CD14-positive monocyte (primary cell): ENCODE measurements at regions of chr14 and their contacts with region 1.

Region 1: GRCh38 chr14:35365130-35366055 is 39.2 kb downstream of the NFKBIA start:
- DNase-seq: peak; percentile 97 to 99 (median 97)
- H3K4me3 ChIP-seq: peak overlapping the region in 1 of 3 experiments; percentile 4
- H3K4me3 Mint-ChIP-seq: peak overlapping the region; percentile 48 to 61
- H3K27ac ChIP-seq: peak overlapping the region; percentile 96 to 98
- H3K27ac Mint-ChIP-seq: peak overlapping the region; percentile 98 to 100 (median 99)
- H3K4me1 ChIP-seq: peaks cover 43 to 44% of the 10 kb centered on the region in 2 donors
- H3K4me1 Mint-ChIP-seq: peaks cover 47% of the 10 kb centered on the region
- H3K27me3 ChIP-seq: no peaks in the 10 kb centered on the region
- H3K27me3 Mint-ChIP-seq: peaks cover 0 to 3% (median 0%) of the 10 kb centered on the region in 3 donors
- CTCF ChIP-seq: no peak

Region 2: GRCh38 chr14:35213143-35213788 is 152.1 kb before region 1 on chr14:
- intact Hi-C with region 1: no loop called
- DNase-seq: no peak
- H3K4me3 ChIP-seq: no peak overlapping the region
- H3K4me3 Mint-ChIP-seq: no peak overlapping the region
- H3K27ac ChIP-seq: no peak overlapping the region
- H3K27ac Mint-ChIP-seq: no peak overlapping the region
- H3K4me1 ChIP-seq: no peaks in the 10 kb centered on the region
- H3K4me1 Mint-ChIP-seq: no peaks in the 10 kb centered on the region
- H3K27me3 ChIP-seq: no peaks in the 10 kb centered on the region
- H3K27me3 Mint-ChIP-seq: no peaks in the 10 kb centered on the region
- CTCF ChIP-seq: no peak

Region 3: GRCh38 chr14:35285168-35286002 is 80.0 kb before region 1 on chr14:
- intact Hi-C with region 1: loop called in 1 of 2 experiments (anchors 10 kb)
- DNase-seq: peak; percentile 86 to 96 (median 94)
- H3K4me3 ChIP-seq: peak overlapping the region; percentile 2 to 72 (median 48)
- H3K4me3 Mint-ChIP-seq: peak overlapping the region; percentile 71 to 85
- H3K27ac ChIP-seq: peak overlapping the region; percentile 55 to 96
- H3K27ac Mint-ChIP-seq: peak overlapping the region; percentile 93 to 99 (median 97)
- H3K4me1 ChIP-seq: peaks cover 45 to 49% of the 10 kb centered on the region in 2 donors
- H3K4me1 Mint-ChIP-seq: peaks cover 50% of the 10 kb centered on the region
- H3K27me3 ChIP-seq: no peaks in the 10 kb centered on the region
- H3K27me3 Mint-ChIP-seq: peaks cover 0 to 4% (median 0%) of the 10 kb centered on the region in 3 donors
- CTCF ChIP-seq: no peak

Region 4: DNA sequence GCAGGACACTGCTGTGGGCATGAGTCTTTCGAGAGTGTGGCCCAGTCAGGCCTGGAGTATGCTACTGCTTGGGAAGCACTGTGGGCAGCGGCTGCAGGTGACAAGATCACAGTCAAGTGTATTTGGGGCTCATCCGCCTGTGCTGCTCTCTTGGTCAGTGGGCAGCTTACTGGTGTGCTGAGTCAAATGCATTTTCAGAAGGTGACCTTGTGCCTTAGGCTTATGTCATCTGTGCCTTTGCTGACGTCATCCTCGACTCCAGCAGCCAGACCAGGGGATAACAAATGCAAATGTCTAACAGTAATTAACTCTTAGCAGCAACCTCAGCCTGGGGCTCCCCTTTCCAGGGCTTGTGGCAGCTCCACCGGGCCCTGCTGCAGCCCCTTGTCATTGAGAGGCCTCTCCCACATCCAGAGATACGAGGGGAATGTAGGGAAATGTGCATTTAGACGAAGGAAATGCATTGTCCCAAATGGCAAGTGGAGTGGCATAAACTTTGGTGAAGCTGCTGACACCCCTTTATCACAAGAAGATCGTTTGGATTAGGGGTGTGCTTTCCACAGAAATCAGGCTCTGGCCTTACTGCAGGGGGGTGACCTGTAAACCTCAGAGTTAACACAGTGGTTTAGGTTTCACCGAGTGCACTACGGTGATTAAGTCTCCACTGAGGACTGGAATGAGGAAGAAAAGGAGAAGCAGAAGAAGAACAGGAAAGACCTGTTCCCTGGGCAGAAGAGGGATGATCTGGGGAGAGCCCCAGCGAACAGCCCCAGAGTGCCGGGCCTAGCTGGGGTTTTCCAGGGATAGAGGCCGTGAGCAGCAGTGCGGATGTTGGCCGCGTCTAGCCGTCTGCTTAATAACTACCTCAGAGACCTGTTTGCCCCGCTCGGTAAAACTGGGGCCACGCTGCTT is 33.5 kb before region 1 on chr14:
- intact Hi-C with region 1: loop called in 1 of 2 experiments (anchors 5 kb)
- DNase-seq: peak; percentile 62 to 93 (median 70)
- H3K4me3 ChIP-seq: peak overlapping the region in 1 of 3 experiments; percentile 48
- H3K4me3 Mint-ChIP-seq: peak overlapping the region; percentile 57 to 74
- H3K27ac ChIP-seq: peak overlapping the region; percentile 39 to 61
- H3K27ac Mint-ChIP-seq: peak overlapping the region; percentile 86 to 94 (median 91)
- H3K4me1 ChIP-seq: peaks cover 48% of the 10 kb centered on the region in 2 donors
- H3K4me1 Mint-ChIP-seq: peaks cover 48% of the 10 kb centered on the region
- H3K27me3 ChIP-seq: no peaks in the 10 kb centered on the region
- H3K27me3 Mint-ChIP-seq: peaks cover 0 to 3% (median 0%) of the 10 kb centered on the region in 3 donors
- CTCF ChIP-seq: no peak